Dorsolateral prefrontal cortex (tissue), 120 donors: ENCODE measurements at regions of chr16 and their contacts with region 1.

Region 1: GRCh38 chr16:68310761-68311511 is at the starts of genes PRMT7 and SLC7A6OS:
- DNase-seq: peak; percentile 90 to 94 (median 93)
- H3K4me3 ChIP-seq: peak within 1 kb of the TSS; percentile 65 to 99 (median 95)
- H3K27ac ChIP-seq: peak within 1 kb of the TSS in 58 of 59 donors; percentile 27 to 96 (median 77)
- H3K27me3 ChIP-seq: no peaks in the 10 kb centered on the region
- CTCF ChIP-seq: peak in 50 of 56 donors; percentile 18 to 81 (median 54)
- total RNA-seq, gene PRMT7: 48.9 to 123 (median 70.7) TPM
- total RNA-seq, gene SLC7A6OS: 11.9 to 33.6 (median 20.1) TPM

Region 2: GRCh38 chr16:68085259-68086071 is 225.5 kb before region 1 on chr16 and contains the start of gene NFATC3:
- intact Hi-C with region 1: loop called (anchors 10 kb)
- DNase-seq: peak; percentile 95 to 99 (median 98)
- H3K4me3 ChIP-seq: peak within 1 kb of the TSS; percentile 71 to 97 (median 85)
- H3K27ac ChIP-seq: peak within 1 kb of the TSS; percentile 91 to 100 (median 99)
- H3K27me3 ChIP-seq: no peaks in the 10 kb centered on the region
- CTCF ChIP-seq: peak in 23 of 56 donors; percentile 6 to 39 (median 23)
- total RNA-seq, gene NFATC3: 30.0 to 60.4 (median 40.8) TPM

Region 3: DNA sequence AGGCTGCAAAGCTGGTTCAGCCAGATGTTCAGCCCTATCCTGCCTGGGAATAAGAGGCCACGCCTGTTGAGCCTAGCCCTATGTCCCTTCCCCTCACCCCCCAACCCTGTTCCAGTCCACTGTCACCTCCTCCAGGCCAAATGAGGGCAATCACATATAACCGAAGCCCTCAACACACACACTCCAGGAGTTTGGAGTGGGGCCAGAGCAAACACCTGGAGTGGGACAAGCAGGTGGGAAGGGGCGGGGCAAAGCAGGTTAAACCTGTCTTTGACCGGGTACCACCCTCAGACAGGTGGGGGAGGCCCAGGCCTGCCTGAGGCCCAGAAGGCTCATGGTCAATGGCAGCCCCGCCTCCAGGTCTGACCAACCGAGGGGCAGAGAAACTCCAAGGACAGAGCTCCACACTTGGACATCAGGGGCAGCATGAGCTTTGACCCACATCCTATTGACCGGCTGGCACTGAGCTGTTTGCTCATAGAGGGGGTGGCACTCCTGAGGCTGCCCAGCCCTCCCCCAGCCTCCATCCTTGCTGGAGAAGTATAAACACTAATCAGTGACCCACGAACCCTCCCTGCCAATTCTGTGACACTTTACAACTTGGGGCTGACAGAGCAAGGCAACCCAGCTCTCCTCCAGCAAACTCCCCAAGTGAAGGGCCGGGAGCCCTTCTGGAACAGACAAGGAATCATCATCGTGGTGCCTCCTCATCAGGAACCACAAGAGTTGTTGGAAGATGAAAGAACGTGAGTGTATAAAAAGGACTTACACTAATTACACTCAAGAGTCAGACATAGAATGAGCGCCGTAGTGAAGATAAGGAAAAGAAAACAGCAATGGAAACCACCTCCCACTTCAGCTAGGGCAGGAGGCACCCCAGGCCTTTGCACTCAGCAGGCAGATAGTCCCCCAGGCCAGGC is 76.5 kb before region 1 on chr16:
- intact Hi-C with region 1: no loop called
- DNase-seq: peak in 2 of 10 donors; percentile 22 to 26
- H3K4me3 ChIP-seq: no peak overlapping the region
- H3K27ac ChIP-seq: peak overlapping the region in 3 of 59 donors; percentile 16 to 65 (median 44)
- H3K27me3 ChIP-seq: no peaks in the 10 kb centered on the region
- CTCF ChIP-seq: no peak

Region 4: DNA sequence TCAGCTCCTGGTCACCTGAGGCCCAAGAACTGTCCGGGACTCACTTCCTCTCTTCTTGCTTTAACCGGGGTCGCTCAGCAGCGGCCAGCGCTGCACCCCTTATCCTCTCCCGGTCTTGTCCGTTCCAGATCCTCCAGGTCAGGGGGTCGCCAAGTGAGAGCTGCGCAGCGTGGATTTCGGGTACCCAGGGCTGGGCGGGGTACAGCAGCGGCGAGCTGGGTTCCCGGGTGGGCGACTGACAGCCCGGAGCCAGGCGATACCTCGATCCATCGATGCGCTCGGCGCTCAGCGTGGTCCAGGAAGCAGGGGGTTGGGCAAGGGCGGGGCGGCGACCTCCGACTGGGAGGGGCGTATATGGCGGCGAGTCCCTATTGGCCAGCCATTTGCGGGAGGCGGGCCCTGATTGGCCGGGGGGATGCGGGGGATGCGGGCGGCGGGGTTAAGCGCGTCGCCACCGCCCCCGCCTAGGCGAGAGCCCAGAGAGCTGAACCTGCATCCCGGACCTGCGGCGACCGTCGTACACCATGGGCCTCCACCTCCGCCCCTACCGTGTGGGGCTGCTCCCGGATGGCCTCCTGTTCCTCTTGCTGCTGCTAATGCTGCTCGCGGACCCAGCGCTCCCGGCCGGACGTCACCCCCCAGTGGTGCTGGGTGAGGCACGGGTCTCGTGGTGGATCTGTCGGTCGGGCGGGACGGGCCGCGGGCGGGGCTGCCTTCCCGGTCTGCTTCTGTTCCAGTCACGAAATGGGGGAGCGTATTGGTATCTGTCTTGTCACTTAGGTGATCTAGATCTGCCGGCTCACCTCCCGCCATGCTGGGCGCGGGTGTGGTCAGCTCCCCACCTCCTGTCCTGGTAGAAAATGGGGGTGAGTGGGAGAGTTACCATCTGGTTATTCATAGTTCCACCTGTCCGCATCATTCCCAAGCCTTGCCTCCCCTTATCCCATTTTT is 65.8 kb before region 1 on chr16 and contains the start of gene PLA2G15:
- intact Hi-C with region 1: loop called (anchors 2 to 5 kb)
- DNase-seq: peak; percentile 92 to 98 (median 95)
- H3K4me3 ChIP-seq: peak within 1 kb of the TSS; percentile 70 to 100 (median 94)
- H3K27ac ChIP-seq: peak within 1 kb of the TSS in 52 of 59 donors; percentile 4 to 91 (median 66)
- H3K27me3 ChIP-seq: no peaks in the 10 kb centered on the region
- CTCF ChIP-seq: peak in 24 of 56 donors; percentile 4 to 50 (median 19)
- total RNA-seq, gene PLA2G15: 13.4 to 34.2 (median 20.2) TPM

Region 5: GRCh38 chr16:68264128-68265077 is 46.5 kb before region 1 on chr16 and contains the start of gene SLC7A6:
- intact Hi-C with region 1: loop called (anchors 2 to 5 kb)
- DNase-seq: peak; percentile 59 to 84 (median 68)
- H3K4me3 ChIP-seq: peak within 1 kb of the TSS; percentile 64 to 97 (median 87)
- H3K27ac ChIP-seq: peak within 1 kb of the TSS; percentile 45 to 97 (median 90)
- H3K27me3 ChIP-seq: no peaks in the 10 kb centered on the region
- CTCF ChIP-seq: peak in 53 of 56 donors; percentile 19 to 80 (median 64)
- total RNA-seq, gene SLC7A6: 21.3 to 61.6 (median 36.3) TPM